IMR-90 (cell line): ENCODE measurements at regions of chr10 and their contacts with region 1.

Region 1: GRCh38 chr10:102503281-102504220 is at the start of gene SUFU:
- DNase-seq: peak; percentile 99
- ATAC-seq: peak; percentile 73
- H3K4me3 ChIP-seq: peak within 1 kb of the TSS; percentile 96
- H3K27ac ChIP-seq: peak within 1 kb of the TSS; percentile 83
- H3K4me1 ChIP-seq: peaks cover 3% of the 10 kb centered on the region
- H3K27me3 ChIP-seq: no peaks in the 10 kb centered on the region
- CTCF ChIP-seq: peak; percentile 96
- POLR2A ChIP-seq: peak; percentile 67
- RAD21 ChIP-seq: peak; percentile 90
- total RNA-seq, gene SUFU: 2.2 TPM in 2 replicates

Region 2: GRCh38 chr10:102517553-102517952 is 14.0 kb after region 1 on chr10:
- CTCF ChIA-PET with region 1: interaction called, 10 read pairs
- POLR2A ChIA-PET with region 1: no interaction called
- dilution Hi-C with region 1: no loop called
- in situ Hi-C with region 1: no loop called
- intact Hi-C with region 1: no loop called
- DNase-seq: peak; percentile 84
- ATAC-seq: peak; percentile 96
- H3K4me3 ChIP-seq: no peak overlapping the region
- H3K27ac ChIP-seq: no peak overlapping the region; the same call in 1 of the 2 replicates
- H3K4me1 ChIP-seq: peaks cover 5% of the 10 kb centered on the region
- H3K27me3 ChIP-seq: no peaks in the 10 kb centered on the region
- CTCF ChIP-seq: no peak
- POLR2A ChIP-seq: no peak
- RAD21 ChIP-seq: no peak

Region 3: GRCh38 chr10:102583435-102584417 is 80.2 kb after region 1 on chr10:
- CTCF ChIA-PET with region 1: interaction called, 16 read pairs
- POLR2A ChIA-PET with region 1: no interaction called
- dilution Hi-C with region 1: loop called (anchors 10 kb)
- in situ Hi-C with region 1: no loop called
- intact Hi-C with region 1: loop called (anchors 1 kb)
- DNase-seq: peak; percentile 91
- ATAC-seq: peak; percentile 93
- H3K4me3 ChIP-seq: no peak overlapping the region
- H3K27ac ChIP-seq: no peak overlapping the region
- H3K4me1 ChIP-seq: peaks cover 21% of the 10 kb centered on the region
- H3K27me3 ChIP-seq: no peaks in the 10 kb centered on the region
- CTCF ChIP-seq: peak; percentile 90
- POLR2A ChIP-seq: no peak
- RAD21 ChIP-seq: peak; percentile 93

Region 4: DNA sequence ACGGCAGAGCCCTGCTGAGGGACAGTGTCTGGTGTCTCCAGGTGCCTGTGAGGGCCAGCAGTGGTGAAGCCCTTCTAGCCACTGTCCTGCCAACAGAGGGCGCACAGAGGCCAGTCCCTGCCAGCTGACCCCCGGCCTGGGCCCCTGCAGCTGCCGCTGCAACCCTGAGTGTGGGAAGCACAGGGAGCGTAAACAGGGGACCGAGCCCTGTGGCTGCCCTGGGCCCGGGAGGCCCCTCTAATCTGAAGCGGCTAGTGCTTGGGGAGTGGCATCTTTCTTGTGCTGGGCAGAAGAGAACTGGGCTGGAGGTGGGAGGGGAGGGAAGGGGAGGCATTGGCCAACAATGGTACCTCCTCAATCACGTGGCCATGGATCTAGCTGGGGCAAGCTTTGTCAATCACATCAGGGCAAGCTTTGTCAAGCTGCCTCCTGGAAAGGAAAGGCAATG is 175.3 kb after region 1 on chr10:
- CTCF ChIA-PET with region 1: no interaction called
- POLR2A ChIA-PET with region 1: no interaction called
- dilution Hi-C with region 1: no loop called
- in situ Hi-C with region 1: no loop called
- intact Hi-C with region 1: loop called (anchors 1 kb)
- DNase-seq: peak; percentile 52
- ATAC-seq: peak; percentile 40
- H3K4me3 ChIP-seq: no peak overlapping the region
- H3K27ac ChIP-seq: peak overlapping the region; percentile 15
- H3K4me1 ChIP-seq: peaks cover 44% of the 10 kb centered on the region
- H3K27me3 ChIP-seq: no peaks in the 10 kb centered on the region
- CTCF ChIP-seq: peak; percentile 76
- POLR2A ChIP-seq: no peak
- RAD21 ChIP-seq: peak; percentile 70

Region 5: GRCh38 chr10:102713814-102714620 is 210.5 kb after region 1 on chr10 and contains the start of gene ARL3:
- CTCF ChIA-PET with region 1: no interaction called
- POLR2A ChIA-PET with region 1: no interaction called
- dilution Hi-C with region 1: no loop called
- in situ Hi-C with region 1: no loop called
- intact Hi-C with region 1: loop called (anchors 5 kb)
- DNase-seq: peak; percentile 98
- ATAC-seq: peak; percentile 89
- H3K4me3 ChIP-seq: peak within 1 kb of the TSS; percentile 81
- H3K27ac ChIP-seq: peak within 1 kb of the TSS; percentile 86
- H3K4me1 ChIP-seq: peaks cover 9% of the 10 kb centered on the region
- H3K27me3 ChIP-seq: no peaks in the 10 kb centered on the region
- CTCF ChIP-seq: peak; percentile 41; the same call in 1 of the 2 replicates
- POLR2A ChIP-seq: peak; percentile 43; the same call in 1 of the 2 replicates
- RAD21 ChIP-seq: 0 out of 2 replicates have a peak, but pooled peaks have one; percentile 34
- total RNA-seq, gene ARL3: 5.0 and 11.7 TPM in 2 replicates